WTC11 (cell line): ENCODE measurements at regions of chr15 and their contacts with region 1.

Region 1: DNA sequence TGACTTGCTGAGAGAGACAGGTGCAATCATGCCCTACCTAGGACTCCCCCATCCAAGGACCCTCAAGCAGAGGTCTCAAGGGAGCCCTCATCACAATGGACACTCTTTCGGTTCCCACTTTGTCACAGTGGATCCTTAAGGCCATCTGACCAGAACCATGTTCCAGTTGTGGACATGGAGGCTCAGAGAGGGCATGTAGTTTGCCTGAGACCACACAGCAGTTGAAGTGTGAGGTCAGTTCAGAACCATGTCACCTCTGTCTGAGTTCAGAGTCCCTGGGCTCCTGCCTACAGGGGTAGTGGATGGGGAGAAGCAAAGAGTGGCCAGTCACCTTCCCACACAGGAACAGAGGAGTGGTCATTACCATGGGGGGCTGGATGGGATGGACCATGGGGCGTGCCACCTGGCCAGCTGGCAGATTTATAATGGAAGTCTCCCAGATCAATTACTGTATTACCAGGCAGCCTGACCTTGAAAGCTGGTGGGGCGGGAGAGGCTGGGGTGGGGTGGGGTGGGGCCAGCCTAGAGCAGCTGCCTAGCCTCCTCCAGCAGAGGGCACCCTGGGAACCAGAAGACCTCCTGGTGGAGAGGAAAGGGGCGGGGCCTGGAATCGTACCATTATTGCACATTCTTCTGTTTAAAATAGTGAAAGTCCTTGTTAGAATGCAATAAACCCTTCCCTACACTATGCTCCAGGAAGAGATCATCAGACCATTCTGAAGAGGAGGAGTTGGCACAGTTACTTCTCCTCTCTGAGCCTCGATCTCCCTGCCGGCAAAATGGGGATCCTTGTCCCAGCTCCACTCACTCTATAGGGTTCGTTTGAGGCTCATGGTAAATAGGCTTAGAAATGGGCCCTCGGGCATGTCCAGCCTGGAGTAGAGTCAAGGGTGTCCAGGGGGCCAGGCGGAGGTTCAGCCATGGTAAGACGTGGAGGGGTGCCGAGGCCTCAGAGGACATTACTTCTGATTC is 26.9 kb upstream of the LINGO1 start:
- DNase-seq: peak; percentile 77
- ATAC-seq: peak; percentile 46
- H3K4me3 Mint-ChIP-seq: no peak overlapping the region
- H3K27ac Mint-ChIP-seq: no peak overlapping the region
- H3K4me1 Mint-ChIP-seq: peaks cover 29% of the 10 kb centered on the region
- H3K27me3 Mint-ChIP-seq: no peaks in the 10 kb centered on the region; the same call in 1 of the 2 replicates
- CTCF ChIP-seq: no peak

Region 2: DNA sequence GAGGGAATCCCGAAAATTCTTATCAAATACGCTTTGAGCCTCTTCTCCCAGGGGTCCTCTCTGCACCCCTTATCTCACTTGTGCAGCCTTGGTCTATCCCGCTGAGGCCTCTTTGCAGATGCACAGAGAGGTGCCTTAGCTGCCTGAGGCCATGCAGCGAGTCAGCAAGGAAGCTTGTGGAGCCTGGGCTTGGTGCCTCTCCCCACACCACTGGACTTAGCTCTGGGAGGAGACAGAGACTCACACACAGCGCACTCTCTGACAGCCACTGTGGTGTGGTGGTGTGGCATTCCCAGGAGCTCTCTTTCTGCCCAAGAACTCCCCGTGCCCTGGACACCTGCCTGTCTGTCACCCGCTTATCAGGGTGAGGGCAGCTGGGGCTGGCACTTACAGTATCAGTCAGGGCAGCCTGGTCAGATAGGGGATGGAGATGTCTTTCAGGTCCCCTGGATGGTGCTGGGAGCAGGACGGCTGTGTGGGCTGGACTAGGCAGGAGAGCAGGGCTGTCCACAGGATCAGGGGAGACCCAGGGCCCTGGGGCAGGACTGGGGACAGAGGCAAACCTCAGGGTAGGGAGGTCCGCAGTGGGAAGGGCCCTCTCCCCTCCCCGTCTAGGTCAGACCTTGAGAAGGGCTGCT is 16.7 kb before region 1 on chr15:
- CTCF ChIA-PET with region 1: interaction called, 237 read pairs
- POLR2A ChIA-PET with region 1: interaction called, 3 read pairs
- DNase-seq: no peak
- ATAC-seq: peak; percentile 14
- H3K4me3 Mint-ChIP-seq: no peak overlapping the region
- H3K27ac Mint-ChIP-seq: no peak overlapping the region
- H3K4me1 Mint-ChIP-seq: peaks cover 13% of the 10 kb centered on the region
- H3K27me3 Mint-ChIP-seq: no peaks in the 10 kb centered on the region
- CTCF ChIP-seq: no peak

Region 3: GRCh38 chr15:77747175-77748077 is 87.8 kb after region 1 on chr15:
- CTCF ChIA-PET with region 1: interaction called, 16 read pairs
- POLR2A ChIA-PET with region 1: no interaction called
- DNase-seq: no peak
- ATAC-seq: no peak
- H3K4me3 Mint-ChIP-seq: no peak overlapping the region
- H3K27ac Mint-ChIP-seq: no peak overlapping the region
- H3K4me1 Mint-ChIP-seq: peaks cover 21% of the 10 kb centered on the region
- H3K27me3 Mint-ChIP-seq: peaks cover 47% of the 10 kb centered on the region
- CTCF ChIP-seq: no peak

Region 4: GRCh38 chr15:77836121-77836692 is 176.6 kb after region 1 on chr15:
- CTCF ChIA-PET with region 1: interaction called, 12 read pairs
- POLR2A ChIA-PET with region 1: no interaction called
- DNase-seq: no peak
- ATAC-seq: peak; percentile 84
- H3K4me3 Mint-ChIP-seq: no peak overlapping the region
- H3K27ac Mint-ChIP-seq: no peak overlapping the region
- H3K4me1 Mint-ChIP-seq: peaks cover 16% of the 10 kb centered on the region
- H3K27me3 Mint-ChIP-seq: no peaks in the 10 kb centered on the region; the same call in 1 of the 2 replicates
- CTCF ChIP-seq: no peak